Caco-2 (cell line): ENCODE measurements at regions of chr1 and their contacts with region 1.

Region 1: GRCh38 chr1:181936768-181937581 is 124.5 kb downstream of the ZNF648 start:
- DNase-seq: peak; percentile 63 to 70
- H3K4me3 ChIP-seq: no peak overlapping the region
- H3K4me3 Mint-ChIP-seq: no peak overlapping the region
- H3K27ac Mint-ChIP-seq: no peak overlapping the region
- H3K4me1 ChIP-seq: no peaks in the 10 kb centered on the region
- H3K4me1 Mint-ChIP-seq: no peaks in the 10 kb centered on the region
- H3K27me3 ChIP-seq: no peaks in the 10 kb centered on the region; the same call in 1 of the 2 replicates
- H3K27me3 Mint-ChIP-seq: peaks cover 3% of the 10 kb centered on the region
- CTCF ChIP-seq: peak; percentile 64 to 72

Region 2: DNA sequence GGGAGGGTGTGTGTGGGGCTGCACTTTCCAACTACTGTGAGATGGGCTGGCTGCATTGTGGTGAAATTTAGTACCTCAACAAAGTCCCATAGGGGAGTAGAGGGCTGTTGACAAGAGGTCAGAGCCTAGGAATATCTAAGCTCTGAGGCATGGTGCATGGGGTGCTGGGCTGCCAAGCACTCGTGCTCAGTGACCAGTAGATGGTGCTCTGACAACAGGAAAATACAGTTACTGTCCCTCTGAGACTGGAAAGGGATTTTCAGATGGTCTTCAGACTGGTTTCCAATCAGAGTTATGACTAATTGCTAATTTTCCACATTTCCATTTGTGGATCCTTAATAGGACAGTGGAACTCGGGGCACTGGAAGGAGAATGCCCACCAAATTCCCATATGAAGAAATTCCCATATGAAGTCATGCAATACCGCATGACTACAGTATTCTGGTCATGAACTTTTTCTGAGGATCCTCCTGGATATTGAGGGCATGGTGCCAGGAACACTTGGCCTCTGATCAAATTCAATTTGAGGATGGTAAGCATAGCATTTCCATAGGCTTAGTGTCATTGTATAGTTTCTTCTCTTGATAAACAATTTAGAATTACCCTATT is 457.7 kb before region 1 on chr1:
- CTCF ChIA-PET with region 1: interaction called, 19 read pairs
- POLR2A ChIA-PET with region 1: no interaction called
- intact Hi-C with region 1: loop called (anchors 1 kb)
- DNase-seq: peak; percentile 52 to 66
- H3K4me3 ChIP-seq: no peak overlapping the region
- H3K4me3 Mint-ChIP-seq: no peak overlapping the region
- H3K27ac Mint-ChIP-seq: no peak overlapping the region
- H3K4me1 ChIP-seq: no peaks in the 10 kb centered on the region
- H3K4me1 Mint-ChIP-seq: peaks cover 7% of the 10 kb centered on the region
- H3K27me3 ChIP-seq: no peaks in the 10 kb centered on the region
- H3K27me3 Mint-ChIP-seq: peaks cover 3% of the 10 kb centered on the region
- CTCF ChIP-seq: peak; percentile 74 to 88

Region 3: GRCh38 chr1:181676269-181676668 is 260.7 kb before region 1 on chr1:
- CTCF ChIA-PET with region 1: interaction called, 4 read pairs
- POLR2A ChIA-PET with region 1: no interaction called
- intact Hi-C with region 1: loop called (anchors 5 kb)
- DNase-seq: peak in 1 of 2 experiments; percentile 45
- H3K4me3 ChIP-seq: no peak overlapping the region
- H3K4me3 Mint-ChIP-seq: no peak overlapping the region
- H3K27ac Mint-ChIP-seq: no peak overlapping the region
- H3K4me1 ChIP-seq: no peaks in the 10 kb centered on the region
- H3K4me1 Mint-ChIP-seq: no peaks in the 10 kb centered on the region
- H3K27me3 ChIP-seq: peaks cover 1% of the 10 kb centered on the region; the same call in 1 of the 2 replicates
- H3K27me3 Mint-ChIP-seq: peaks cover 24% of the 10 kb centered on the region
- CTCF ChIP-seq: peak; percentile 32 to 62

Region 4: DNA sequence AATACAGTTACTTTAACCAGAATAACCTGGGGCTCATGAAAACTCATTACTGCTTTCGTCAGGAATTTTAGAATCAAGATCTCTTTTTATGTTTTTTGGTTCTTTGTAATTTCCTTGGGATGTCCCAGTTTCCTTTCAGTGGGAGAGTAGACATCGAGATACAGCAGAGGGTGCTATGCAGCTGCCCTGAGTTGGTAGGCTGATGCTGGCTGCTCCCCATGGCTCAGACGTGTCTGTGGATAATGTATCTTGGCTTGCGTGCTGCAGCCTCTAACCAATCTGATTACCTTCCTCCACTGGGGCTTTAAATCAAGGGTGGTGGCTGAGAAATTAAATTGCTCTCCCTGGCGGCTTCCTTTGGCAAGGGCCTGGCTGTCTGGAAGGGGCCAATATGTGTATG is 199.9 kb before region 1 on chr1:
- CTCF ChIA-PET with region 1: interaction called, 13 read pairs
- POLR2A ChIA-PET with region 1: no interaction called
- intact Hi-C with region 1: loop called (anchors 1 kb)
- DNase-seq: no peak
- H3K4me3 ChIP-seq: no peak overlapping the region
- H3K4me3 Mint-ChIP-seq: no peak overlapping the region
- H3K27ac Mint-ChIP-seq: no peak overlapping the region
- H3K4me1 ChIP-seq: no peaks in the 10 kb centered on the region
- H3K4me1 Mint-ChIP-seq: no peaks in the 10 kb centered on the region
- H3K27me3 ChIP-seq: no peaks in the 10 kb centered on the region
- H3K27me3 Mint-ChIP-seq: peaks cover 16% of the 10 kb centered on the region
- CTCF ChIP-seq: peak in 1 of 2 experiments; percentile 16

Region 5: GRCh38 chr1:181743878-181744312 is 193.1 kb before region 1 on chr1:
- CTCF ChIA-PET with region 1: interaction called, 13 read pairs
- POLR2A ChIA-PET with region 1: no interaction called
- intact Hi-C with region 1: no loop called
- DNase-seq: no peak
- H3K4me3 ChIP-seq: no peak overlapping the region
- H3K4me3 Mint-ChIP-seq: no peak overlapping the region
- H3K27ac Mint-ChIP-seq: no peak overlapping the region
- H3K4me1 ChIP-seq: no peaks in the 10 kb centered on the region
- H3K4me1 Mint-ChIP-seq: no peaks in the 10 kb centered on the region
- H3K27me3 ChIP-seq: peaks cover 1% of the 10 kb centered on the region
- H3K27me3 Mint-ChIP-seq: peaks cover 19% of the 10 kb centered on the region
- CTCF ChIP-seq: no peak

Region 6: DNA sequence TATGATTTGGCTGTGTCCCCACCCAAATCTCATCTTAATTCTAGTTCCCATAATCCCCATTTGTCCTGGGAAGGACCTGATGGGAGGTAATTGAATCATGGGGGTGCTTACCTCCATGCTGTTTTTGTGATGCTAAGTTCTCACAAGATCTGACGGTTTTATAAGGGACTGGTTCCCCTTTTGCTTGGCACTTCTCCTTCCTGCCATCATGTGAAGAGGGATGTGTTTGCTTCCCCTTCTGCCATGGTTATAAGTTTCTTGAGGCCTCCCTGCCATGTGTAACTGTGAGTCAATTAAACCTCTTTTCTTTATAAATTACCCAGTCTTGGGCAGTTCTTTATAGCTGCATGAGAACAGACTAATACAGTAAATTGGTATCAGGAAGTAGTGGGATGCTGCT is 10.5 kb after region 1 on chr1:
- CTCF ChIA-PET with region 1: no interaction called
- POLR2A ChIA-PET with region 1: no interaction called
- intact Hi-C with region 1: no loop called
- DNase-seq: no peak
- H3K4me3 ChIP-seq: no peak overlapping the region
- H3K4me3 Mint-ChIP-seq: no peak overlapping the region
- H3K27ac Mint-ChIP-seq: no peak overlapping the region
- H3K4me1 ChIP-seq: no peaks in the 10 kb centered on the region
- H3K4me1 Mint-ChIP-seq: no peaks in the 10 kb centered on the region
- H3K27me3 ChIP-seq: no peaks in the 10 kb centered on the region
- H3K27me3 Mint-ChIP-seq: peaks cover 7% of the 10 kb centered on the region
- CTCF ChIP-seq: no peak

Region 7: GRCh38 chr1:182054698-182055326 is 117.8 kb after region 1 on chr1:
- CTCF ChIA-PET with region 1: interaction called, 10 read pairs
- POLR2A ChIA-PET with region 1: interaction called, 3 read pairs
- intact Hi-C with region 1: no loop called
- DNase-seq: peak in 1 of 2 experiments; percentile 64
- H3K4me3 ChIP-seq: no peak overlapping the region
- H3K4me3 Mint-ChIP-seq: no peak overlapping the region
- H3K27ac Mint-ChIP-seq: no peak overlapping the region
- H3K4me1 ChIP-seq: no peaks in the 10 kb centered on the region
- H3K4me1 Mint-ChIP-seq: no peaks in the 10 kb centered on the region
- H3K27me3 ChIP-seq: no peaks in the 10 kb centered on the region; the same call in 1 of the 2 replicates
- H3K27me3 Mint-ChIP-seq: no peaks in the 10 kb centered on the region
- CTCF ChIP-seq: peak; percentile 32 to 45